ENCODE measurements at regions of chrX and their contacts with region 1.

Region 1: GRCh38 chrX:10433296-10433965 is 187.0 kb downstream of the MID1 start:
- DNase-seq: no peak
- H3K4me3 ChIP-seq: no peak overlapping the region
- H3K27ac ChIP-seq: no peak overlapping the region
- H3K4me1 ChIP-seq: no peaks in the 10 kb centered on the region
- H3K27me3 ChIP-seq: no peaks in the 10 kb centered on the region
- CTCF ChIP-seq: no peak

Region 2: GRCh38 chrX:10341309-10341708 is 92.1 kb before region 1 on chrX:
- CTCF ChIA-PET with region 1: no interaction called
- dilution Hi-C with region 1: loop called (anchors 5 kb)
- in situ Hi-C with region 1: no loop called
- intact Hi-C with region 1: no loop called
- DNase-seq: peak; percentile 23
- H3K4me3 ChIP-seq: no peak overlapping the region
- H3K27ac ChIP-seq: no peak overlapping the region
- H3K4me1 ChIP-seq: no peaks in the 10 kb centered on the region
- H3K27me3 ChIP-seq: no peaks in the 10 kb centered on the region
- CTCF ChIP-seq: no peak

Measured in mammary epithelial cell (primary cell).